ENCODE measurements at regions of chr15 and their contacts with region 1.

Region 1: GRCh38 chr15:65318870-65319356 is 14.4 kb downstream of the RNU5B-1 start:
- DNase-seq: no peak
- H3K4me3 ChIP-seq: no peak overlapping the region
- CTCF ChIP-seq: peak; percentile 79

Region 2: DNA sequence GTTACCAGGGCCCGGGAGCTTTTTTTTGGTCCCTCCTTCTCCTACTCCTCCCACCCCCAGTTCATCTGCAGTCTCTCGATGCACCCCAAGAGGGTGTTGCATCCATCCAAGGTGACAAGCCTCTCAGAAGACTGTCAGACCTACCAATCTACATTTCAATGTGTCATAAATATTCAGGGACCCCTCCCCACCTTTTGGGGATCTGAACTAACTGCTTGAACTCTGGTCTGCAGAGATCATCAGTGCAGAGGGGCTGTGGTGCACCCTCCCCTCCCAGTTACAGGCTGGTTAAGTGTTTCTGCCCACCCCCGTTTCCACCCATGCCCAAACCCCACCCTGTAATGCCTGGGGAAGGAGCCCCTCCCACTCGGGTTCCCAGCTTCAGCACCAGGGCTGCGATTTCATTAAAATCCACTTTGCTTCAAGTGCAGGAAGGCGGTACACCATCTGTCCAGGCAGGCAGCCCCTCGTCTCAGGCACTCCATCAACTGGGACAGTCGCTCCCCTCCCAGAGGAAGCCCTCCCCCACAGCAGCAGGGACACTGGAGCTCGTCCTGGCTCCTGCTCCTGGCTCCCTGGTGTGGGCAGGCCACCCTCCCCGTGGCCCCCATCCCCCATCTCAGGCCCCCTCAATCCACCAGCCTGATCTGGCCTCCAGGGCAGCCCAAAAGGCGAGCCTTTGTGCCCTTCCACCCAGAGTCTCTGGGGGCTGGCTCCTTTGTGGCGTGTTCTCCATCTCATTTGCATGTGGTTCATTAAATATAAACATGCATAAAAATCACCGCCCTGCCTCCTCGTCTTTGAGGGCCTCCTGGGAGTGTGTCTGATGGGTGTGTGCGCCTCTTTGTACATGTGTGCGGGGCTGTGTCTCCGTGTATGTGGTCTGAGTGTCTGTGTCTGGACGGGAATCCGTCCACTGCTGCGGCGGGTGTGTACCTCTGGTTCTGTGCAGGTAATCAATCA is 17.9 kb after region 1 on chr15:
- CTCF ChIA-PET with region 1: interaction called, 54 read pairs
- POLR2A ChIA-PET with region 1: no interaction called
- DNase-seq: no peak
- H3K4me3 ChIP-seq: no peak overlapping the region
- CTCF ChIP-seq: no peak

Region 3: DNA sequence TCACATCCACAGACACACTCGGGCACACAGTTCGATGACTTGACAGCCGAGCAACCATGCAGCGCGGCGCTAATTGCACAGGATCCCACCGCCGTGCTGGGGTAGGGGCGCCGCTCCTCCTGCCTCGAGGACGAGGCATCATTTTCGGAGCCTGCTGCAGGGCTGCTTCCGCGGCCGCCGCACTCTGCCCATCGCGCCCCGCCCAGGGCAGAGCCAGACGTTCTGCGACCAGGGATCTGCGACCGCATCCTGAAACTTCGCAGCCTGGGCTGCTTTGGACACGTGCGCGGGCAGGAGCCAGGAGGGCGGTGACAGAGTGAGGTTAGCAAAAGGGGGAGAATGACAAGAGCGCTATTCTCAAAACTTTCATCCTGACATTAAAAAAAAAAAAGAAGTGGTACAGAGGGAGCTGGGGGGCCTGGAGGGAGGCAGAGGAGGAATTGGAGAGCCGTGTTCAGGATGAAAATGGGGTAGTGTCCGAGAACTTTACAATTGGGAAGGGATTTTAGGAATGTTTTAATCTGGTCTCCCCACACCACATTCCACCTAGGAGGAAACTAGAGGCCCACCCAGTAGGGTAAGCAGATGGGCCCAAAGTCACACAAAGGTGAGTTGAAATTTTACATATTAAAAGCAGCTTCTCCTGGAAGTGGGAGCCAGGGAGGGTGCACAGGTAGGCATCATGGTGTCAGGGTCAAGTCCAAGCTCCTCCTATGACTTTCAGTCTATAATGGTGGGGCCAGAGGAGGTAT is 43.0 kb after region 1 on chr15:
- CTCF ChIA-PET with region 1: interaction called, 33 read pairs
- POLR2A ChIA-PET with region 1: no interaction called
- DNase-seq: no peak
- H3K4me3 ChIP-seq: no peak overlapping the region
- CTCF ChIP-seq: no peak

Region 4: GRCh38 chr15:65368302-65369211 is 49.6 kb after region 1 on chr15:
- CTCF ChIA-PET with region 1: interaction called, 652 read pairs
- POLR2A ChIA-PET with region 1: no interaction called
- DNase-seq: no peak
- H3K4me3 ChIP-seq: no peak overlapping the region
- CTCF ChIP-seq: no peak

Region 5: DNA sequence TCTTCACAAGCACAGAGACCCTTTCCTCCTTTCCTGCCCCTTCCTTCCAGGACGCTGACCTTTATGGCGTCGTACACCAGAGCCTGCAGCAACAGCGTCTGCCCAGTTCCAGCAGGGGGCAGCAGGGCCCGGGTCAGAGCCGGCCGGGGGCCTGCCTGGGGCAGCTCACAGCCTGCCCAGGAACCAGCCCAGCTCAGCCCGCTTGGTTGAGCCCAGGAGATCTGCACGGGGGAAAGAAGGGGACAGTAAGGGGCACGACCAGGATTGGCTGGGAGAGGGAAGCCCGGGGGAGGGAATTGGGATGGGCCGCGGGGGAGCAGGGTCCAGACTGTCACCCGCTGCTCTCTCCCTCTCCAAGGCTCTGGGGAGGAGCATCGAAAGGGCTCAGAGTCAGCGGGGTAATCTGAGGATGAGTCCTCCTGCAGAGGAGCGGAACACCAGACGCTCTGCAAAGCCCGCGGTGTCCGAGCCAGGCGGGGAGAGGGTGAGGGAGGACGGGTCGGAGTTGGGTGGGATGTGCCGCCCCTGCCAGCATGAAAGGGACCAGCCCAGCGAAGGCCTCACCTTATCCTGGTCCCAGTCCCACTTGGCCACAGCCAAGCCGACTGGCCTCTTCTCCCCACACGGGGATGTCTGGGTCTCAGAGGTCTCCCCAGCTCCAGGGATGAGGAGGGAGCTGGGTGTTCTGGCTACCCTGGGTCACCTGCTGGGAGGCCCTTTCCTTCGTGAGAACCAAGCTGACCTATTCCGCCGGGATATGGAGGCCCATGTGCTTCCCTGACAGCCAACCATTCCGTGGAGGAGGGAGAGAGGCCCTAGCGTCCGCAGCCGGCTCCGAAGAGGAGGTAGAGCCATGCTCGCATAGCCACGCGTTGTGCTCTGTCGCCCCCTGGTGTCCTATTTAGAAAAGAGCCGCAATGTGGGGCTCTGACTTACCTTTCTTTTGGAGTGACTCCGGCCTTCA is 66.3 kb after region 1 on chr15:
- CTCF ChIA-PET with region 1: interaction called, 652 read pairs
- POLR2A ChIA-PET with region 1: no interaction called
- DNase-seq: peak; percentile 9
- H3K4me3 ChIP-seq: no peak overlapping the region
- CTCF ChIP-seq: peak; percentile 83

Region 6: GRCh38 chr15:65409036-65409631 is 90.2 kb after region 1 on chr15:
- CTCF ChIA-PET with region 1: interaction called, 17 read pairs
- POLR2A ChIA-PET with region 1: no interaction called
- DNase-seq: peak; percentile 89
- H3K4me3 ChIP-seq: no peak overlapping the region
- CTCF ChIP-seq: no peak